Gastrocnemius medialis (tissue), 4 donors: ENCODE measurements at regions of chr5 and their contacts with region 1.

Region 1: DNA sequence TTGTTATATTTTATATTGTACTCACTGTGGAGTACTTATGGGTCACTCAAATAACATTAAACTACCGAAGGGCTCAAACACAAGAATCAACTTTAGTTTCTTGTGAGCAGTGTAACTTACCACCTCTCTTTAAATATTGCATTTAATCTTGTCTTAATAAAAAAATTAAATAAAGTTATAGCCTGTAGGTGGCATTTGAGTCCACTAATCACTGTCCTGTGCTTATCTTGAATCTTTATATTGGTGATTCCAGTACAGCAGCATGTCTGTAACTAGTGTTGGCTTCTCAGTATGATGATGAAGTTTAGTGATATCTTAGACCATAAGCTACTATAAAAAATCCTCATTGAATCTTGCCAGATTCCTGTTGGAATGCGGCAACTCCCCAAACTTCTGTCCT is 313.8 kb downstream of the FAM170A start:
- DNase-seq: no peak
- ATAC-seq: no peak
- H3K4me3 ChIP-seq: no peak overlapping the region
- H3K27ac ChIP-seq: no peak overlapping the region
- H3K4me1 ChIP-seq: no peaks in the 10 kb centered on the region
- H3K27me3 ChIP-seq: no peaks in the 10 kb centered on the region
- CTCF ChIP-seq: peak in 2 of 5 experiments; percentile 26 to 29
- POLR2A ChIP-seq: no peak

Region 2: GRCh38 chr5:119974731-119975434 is 31.7 kb after region 1 on chr5:
- in situ Hi-C with region 1: no loop called
- intact Hi-C with region 1: no loop called
- DNase-seq: no peak
- ATAC-seq: no peak
- H3K4me3 ChIP-seq: no peak overlapping the region
- H3K27ac ChIP-seq: no peak overlapping the region
- H3K4me1 ChIP-seq: no peaks in the 10 kb centered on the region
- H3K27me3 ChIP-seq: no peaks in the 10 kb centered on the region
- CTCF ChIP-seq: no peak
- POLR2A ChIP-seq: no peak

Region 3: DNA sequence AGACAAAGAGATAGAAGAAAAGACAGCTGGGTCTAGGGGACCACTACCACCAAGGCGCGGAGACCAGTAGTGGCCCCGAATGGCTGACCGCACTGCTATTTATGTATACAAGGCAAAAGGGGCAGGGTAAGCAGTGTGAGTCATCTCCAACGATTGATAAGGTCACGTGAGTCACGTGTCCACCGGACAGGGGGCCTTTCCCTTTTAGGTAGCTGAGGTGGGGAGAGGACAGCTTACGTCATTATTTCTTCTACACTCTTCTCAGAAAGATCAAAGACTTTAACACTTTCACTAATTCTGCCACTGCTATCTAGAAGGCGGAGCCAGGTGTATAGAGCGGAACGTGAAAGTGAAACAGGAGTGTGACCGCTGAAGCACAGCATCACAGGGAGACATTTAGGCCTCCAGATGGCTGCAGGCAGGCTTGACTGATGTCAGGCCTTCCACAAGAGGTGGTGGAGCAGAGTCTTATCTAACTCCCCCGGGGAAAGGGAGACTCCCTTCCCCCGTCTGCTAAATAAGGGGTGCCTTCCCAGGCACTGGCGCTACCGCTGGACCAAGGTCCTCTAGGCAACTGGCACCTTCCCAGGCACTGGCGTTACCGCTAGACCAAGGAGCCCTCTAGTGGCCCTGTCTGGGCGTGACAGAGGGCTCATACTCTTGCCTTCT is 514.8 kb after region 1 on chr5:
- in situ Hi-C with region 1: loop called in 2 of 4 experiments (anchors 10 to 25 kb)
- intact Hi-C with region 1: loop called (anchors 2 kb)
- DNase-seq: peak; percentile 57 to 73
- ATAC-seq: peak; percentile 38 to 61
- H3K4me3 ChIP-seq: peak overlapping the region; percentile 11 to 51 (median 36)
- H3K27ac ChIP-seq: peak overlapping the region in 1 of 4 donors; percentile 30
- H3K4me1 ChIP-seq: peaks cover 10 to 19% of the 10 kb centered on the region in 2 donors
- H3K27me3 ChIP-seq: no peaks in the 10 kb centered on the region
- CTCF ChIP-seq: peak; percentile 54 to 71 (median 60)
- POLR2A ChIP-seq: no peak

Region 4: GRCh38 chr5:120463991-120464626 is 521.0 kb after region 1 on chr5 and contains the start of gene PRR16:
- in situ Hi-C with region 1: loop called in 2 of 4 experiments (anchors 10 to 25 kb)
- intact Hi-C with region 1: loop called (anchors 2 kb)
- DNase-seq: peak; percentile 22 to 49
- ATAC-seq: peak; percentile 60 to 66
- H3K4me3 ChIP-seq: peak within 1 kb of the TSS; percentile 72 to 90 (median 82)
- H3K27ac ChIP-seq: peak within 1 kb of the TSS; percentile 78 to 82 (median 82)
- H3K4me1 ChIP-seq: peaks cover 25 to 29% of the 10 kb centered on the region in 2 donors
- H3K27me3 ChIP-seq: no peaks in the 10 kb centered on the region
- CTCF ChIP-seq: peak in 2 of 5 experiments; percentile 41 to 55
- POLR2A ChIP-seq: peak; percentile 23 to 47
- total RNA-seq, gene PRR16: 0.66 to 3.9 (median 2.6) TPM

Region 5: DNA sequence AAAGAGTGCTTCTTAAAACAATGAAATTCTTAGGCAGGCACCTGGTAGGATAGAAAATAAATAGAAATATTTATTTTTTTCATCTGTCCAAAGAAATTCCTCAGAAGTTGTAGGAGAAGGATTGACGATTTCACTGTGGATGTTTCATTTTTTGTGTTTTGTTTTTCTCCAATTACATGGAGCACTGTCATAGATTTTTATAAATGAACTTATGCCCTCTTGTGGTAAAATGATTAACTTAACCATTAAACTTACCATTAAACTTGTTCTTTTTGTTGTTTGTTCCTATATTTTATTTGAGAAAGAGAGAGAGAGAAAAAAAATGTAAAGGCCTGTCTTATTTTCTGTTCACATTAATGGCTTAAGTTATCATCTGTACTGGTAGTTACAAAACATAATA is 860.1 kb after region 1 on chr5:
- in situ Hi-C with region 1: loop called in 1 of 4 experiments (anchors 25 kb)
- intact Hi-C with region 1: loop called (anchors 10 kb)
- DNase-seq: no peak
- ATAC-seq: no peak
- H3K4me3 ChIP-seq: no peak overlapping the region
- H3K27ac ChIP-seq: no peak overlapping the region
- H3K4me1 ChIP-seq: peaks cover 0 to 10% of the 10 kb centered on the region in 2 donors
- H3K27me3 ChIP-seq: no peaks in the 10 kb centered on the region
- CTCF ChIP-seq: peak in 2 of 5 experiments; percentile 12 to 33
- POLR2A ChIP-seq: no peak

Region 6: GRCh38 chr5:120817044-120817985 is 874.2 kb after region 1 on chr5:
- in situ Hi-C with region 1: loop called in 1 of 4 experiments (anchors 25 kb)
- intact Hi-C with region 1: no loop called
- DNase-seq: no peak
- ATAC-seq: no peak
- H3K4me3 ChIP-seq: no peak overlapping the region
- H3K27ac ChIP-seq: no peak overlapping the region
- H3K4me1 ChIP-seq: no peaks in the 10 kb centered on the region
- H3K27me3 ChIP-seq: no peaks in the 10 kb centered on the region
- CTCF ChIP-seq: no peak
- POLR2A ChIP-seq: no peak